Panc1 (cell line): ENCODE measurements at regions of chr11 and their contacts with region 1.

Region 1: GRCh38 chr11:133803026-133803425 is 42.3 kb downstream of the SPATA19 start:
- DNase-seq: no peak
- ATAC-seq: no peak
- H3K4me3 ChIP-seq: no peak overlapping the region
- H3K27ac ChIP-seq: no peak overlapping the region
- H3K4me1 ChIP-seq: no peaks in the 10 kb centered on the region
- H3K27me3 ChIP-seq: 0 out of 2 replicates have a peak, but pooled peaks cover 2% of the 10 kb centered on the region
- CTCF ChIP-seq: no peak

Region 2: GRCh38 chr11:133762538-133762937 is 40.5 kb before region 1 on chr11:
- CTCF ChIA-PET with region 1: no interaction called
- POLR2A ChIA-PET with region 1: no interaction called
- in situ Hi-C with region 1: no loop called
- intact Hi-C with region 1: loop called (anchors 1 kb)
- DNase-seq: no peak
- ATAC-seq: no peak
- H3K4me3 ChIP-seq: no peak overlapping the region
- H3K27ac ChIP-seq: no peak overlapping the region
- H3K4me1 ChIP-seq: no peaks in the 10 kb centered on the region
- H3K27me3 ChIP-seq: no peaks in the 10 kb centered on the region
- CTCF ChIP-seq: no peak